WTC11 (cell line): ENCODE measurements at regions of chr12 and their contacts with region 1.

Region 1: GRCh38 chr12:49358483-49359141 is 8.7 kb upstream of the SPATS2 start:
- DNase-seq: peak; percentile 67
- ATAC-seq: peak; percentile 99
- H3K4me3 Mint-ChIP-seq: no peak overlapping the region
- H3K27ac Mint-ChIP-seq: no peak overlapping the region
- H3K4me1 Mint-ChIP-seq: no peaks in the 10 kb centered on the region
- H3K27me3 Mint-ChIP-seq: peaks cover 3% of the 10 kb centered on the region; the same call in 1 of the 2 replicates
- CTCF ChIP-seq: peak; percentile 65

Region 2: GRCh38 chr12:49296034-49296835 is 62.4 kb before region 1 on chr12:
- CTCF ChIA-PET with region 1: interaction called, 14 read pairs
- POLR2A ChIA-PET with region 1: no interaction called
- DNase-seq: peak; percentile 84
- ATAC-seq: peak; percentile 58
- H3K4me3 Mint-ChIP-seq: peak overlapping the region; percentile 67
- H3K27ac Mint-ChIP-seq: no peak overlapping the region
- H3K4me1 Mint-ChIP-seq: peaks cover 30% of the 10 kb centered on the region
- H3K27me3 Mint-ChIP-seq: peaks cover 91% of the 10 kb centered on the region
- CTCF ChIP-seq: peak; percentile 88

Region 3: DNA sequence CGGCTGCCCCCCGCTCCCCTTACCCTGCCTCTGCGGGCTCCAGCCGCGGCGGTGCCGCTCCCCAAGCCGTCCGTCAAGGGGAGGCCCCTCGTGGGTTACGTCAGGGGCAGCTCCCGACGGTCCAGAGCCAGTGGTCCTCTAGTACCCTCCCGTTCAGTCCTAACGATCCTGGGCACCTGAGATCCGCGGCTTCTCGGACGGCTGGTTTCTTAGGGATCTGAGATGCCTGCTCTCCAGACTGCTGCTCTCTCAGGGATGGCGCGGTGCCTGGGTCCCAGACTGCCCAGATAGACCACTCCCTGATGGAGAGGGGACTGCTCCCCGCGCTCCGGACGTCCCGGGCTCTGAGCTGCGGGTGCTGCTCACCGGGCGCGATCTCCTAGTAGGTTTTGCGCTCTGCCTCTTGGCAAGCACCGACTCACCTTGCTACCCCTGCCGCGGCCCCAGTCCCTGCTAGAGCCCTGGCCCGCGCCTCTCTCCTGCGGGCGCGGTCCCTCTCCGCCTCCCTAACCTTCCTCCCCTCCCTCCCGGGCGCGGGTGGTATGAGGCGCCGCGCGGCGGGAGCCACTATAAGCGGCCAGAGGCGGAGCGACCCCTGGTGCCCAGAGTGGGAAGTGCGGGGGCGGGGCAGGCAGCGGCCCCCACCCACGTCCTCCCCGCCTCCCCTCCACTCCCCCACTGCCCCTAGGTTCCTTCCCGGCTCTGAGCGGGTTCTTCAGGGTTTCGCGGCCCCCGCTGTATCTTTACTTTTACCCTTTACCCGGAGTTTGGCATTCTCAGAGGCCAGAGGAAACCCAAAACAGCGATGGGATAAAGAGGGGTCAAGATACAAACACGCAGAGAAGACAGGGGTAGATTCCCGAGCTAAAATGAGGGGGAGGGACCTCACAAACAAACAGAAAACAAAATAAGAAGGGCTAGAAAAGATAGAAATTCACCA is 21.7 kb before region 1 on chr12 and contains the start of gene C1QL4:
- CTCF ChIA-PET with region 1: interaction called, 50 read pairs
- POLR2A ChIA-PET with region 1: interaction called, 3 read pairs
- DNase-seq: peak; percentile 93
- ATAC-seq: peak; percentile 55
- H3K4me3 Mint-ChIP-seq: peak within 1 kb of the TSS; percentile 70
- H3K27ac Mint-ChIP-seq: no peak within 1 kb of the TSS
- H3K4me1 Mint-ChIP-seq: peaks cover 56% of the 10 kb centered on the region
- H3K27me3 Mint-ChIP-seq: peaks cover 99% of the 10 kb centered on the region
- CTCF ChIP-seq: peak; percentile 97
- total RNA-seq, gene C1QL4: 0.92 to 1.2 TPM (median 1.2 TPM) in 3 replicates

Region 4: DNA sequence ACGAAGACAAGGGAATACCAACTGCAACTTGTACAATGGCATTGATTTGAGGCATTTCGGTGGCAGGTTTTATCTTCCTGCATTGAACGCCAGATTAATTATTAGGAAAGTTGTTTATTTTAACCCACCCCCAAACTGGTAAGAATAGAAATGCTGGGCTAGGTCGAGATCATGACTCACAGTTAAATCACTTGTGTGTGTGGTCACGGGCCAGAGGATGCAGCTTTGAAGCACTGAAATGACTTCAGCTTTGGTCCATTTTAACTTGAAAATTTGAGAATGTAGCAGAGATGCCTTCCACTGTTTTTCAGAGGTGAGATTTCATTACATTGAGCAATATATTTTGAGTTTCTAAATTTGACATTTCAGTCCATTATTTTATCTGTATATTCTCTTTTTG is 156.7 kb after region 1 on chr12:
- CTCF ChIA-PET with region 1: interaction called, 141 read pairs
- POLR2A ChIA-PET with region 1: interaction called, 5 read pairs
- DNase-seq: no peak
- ATAC-seq: no peak
- H3K4me3 Mint-ChIP-seq: no peak overlapping the region
- H3K27ac Mint-ChIP-seq: no peak overlapping the region; the same call in 1 of the 2 replicates
- H3K4me1 Mint-ChIP-seq: no peaks in the 10 kb centered on the region
- H3K27me3 Mint-ChIP-seq: no peaks in the 10 kb centered on the region
- CTCF ChIP-seq: no peak

Region 5: DNA sequence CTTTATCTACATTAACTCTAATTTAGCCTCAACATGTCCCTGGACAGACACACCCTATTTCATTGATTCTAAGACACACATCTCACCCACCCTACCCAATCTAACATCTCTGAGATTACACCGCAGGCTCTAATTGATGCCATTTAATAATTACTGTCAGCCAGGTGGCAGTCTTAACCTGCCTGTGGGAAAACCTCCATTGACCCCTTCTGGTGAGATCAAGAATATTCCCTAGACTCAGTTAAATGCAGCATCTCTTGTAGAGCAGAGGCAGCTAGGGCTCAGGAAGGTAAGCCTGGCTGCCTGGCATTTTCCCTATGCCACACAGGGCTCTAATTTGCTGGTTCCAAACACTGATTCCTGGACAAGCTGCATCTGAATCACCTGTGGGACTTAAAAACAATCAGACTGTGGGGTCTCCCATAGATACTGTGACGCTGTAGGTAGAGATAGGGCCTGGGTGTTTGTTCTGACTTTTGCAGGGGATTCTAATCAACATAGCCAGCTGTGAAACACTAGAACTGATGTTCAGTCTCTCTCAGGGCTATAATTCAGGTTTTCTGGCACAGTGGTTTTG is 195.0 kb after region 1 on chr12:
- CTCF ChIA-PET with region 1: interaction called, 29 read pairs
- POLR2A ChIA-PET with region 1: no interaction called
- DNase-seq: no peak
- ATAC-seq: peak; percentile 62
- H3K4me3 Mint-ChIP-seq: no peak overlapping the region
- H3K27ac Mint-ChIP-seq: no peak overlapping the region
- H3K4me1 Mint-ChIP-seq: peaks cover 3% of the 10 kb centered on the region; the same call in 1 of the 2 replicates
- H3K27me3 Mint-ChIP-seq: peaks cover 33% of the 10 kb centered on the region
- CTCF ChIP-seq: no peak